Activated CD4-positive, alpha-beta memory T cell treated with anti-CD3 and anti-CD28 coated beads for 36 hours (primary cell): ENCODE measurements at regions of chr6 and their contacts with region 1.

Region 1: GRCh38 chr6:154218301-154218700 is 138.3 kb downstream of the IPCEF1 start:
- DNase-seq: peak; percentile 57
- H3K4me3 Mint-ChIP-seq: peak overlapping the region; percentile 68
- H3K27ac Mint-ChIP-seq: peak overlapping the region; percentile 88
- H3K4me1 Mint-ChIP-seq: peaks cover 62% of the 10 kb centered on the region
- H3K27me3 Mint-ChIP-seq: no peaks in the 10 kb centered on the region

Region 2: GRCh38 chr6:154187714-154188113 is 30.6 kb before region 1 on chr6:
- CTCF ChIA-PET with region 1: no interaction called
- POLR2A ChIA-PET with region 1: no interaction called
- intact Hi-C with region 1: loop called (anchors 2 kb)
- DNase-seq: no peak
- H3K4me3 Mint-ChIP-seq: no peak overlapping the region
- H3K27ac Mint-ChIP-seq: peak overlapping the region; percentile 51
- H3K4me1 Mint-ChIP-seq: peaks cover 41% of the 10 kb centered on the region
- H3K27me3 Mint-ChIP-seq: no peaks in the 10 kb centered on the region

Region 3: DNA sequence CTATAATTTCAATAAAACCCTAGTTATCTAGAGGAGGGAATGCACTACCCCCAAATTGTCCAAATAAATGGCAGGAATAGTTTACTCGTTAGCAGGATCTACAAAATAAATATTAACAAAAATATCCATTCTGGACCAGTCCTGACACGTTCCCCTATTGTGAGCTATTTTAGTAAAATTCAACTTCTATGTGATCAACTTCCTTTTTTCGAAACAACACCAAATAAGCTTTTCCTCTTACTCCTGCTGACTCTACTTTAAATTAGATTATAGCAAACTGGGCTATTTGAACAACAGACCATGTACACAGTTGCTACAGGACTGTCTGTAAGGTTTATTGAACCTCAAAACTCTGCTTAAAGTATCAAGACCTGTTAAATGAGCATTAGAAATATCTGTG is 16.0 kb before region 1 on chr6:
- CTCF ChIA-PET with region 1: no interaction called
- POLR2A ChIA-PET with region 1: no interaction called
- intact Hi-C with region 1: loop called (anchors 1 kb)
- DNase-seq: no peak
- H3K4me3 Mint-ChIP-seq: no peak overlapping the region
- H3K27ac Mint-ChIP-seq: no peak overlapping the region
- H3K4me1 Mint-ChIP-seq: peaks cover 52% of the 10 kb centered on the region
- H3K27me3 Mint-ChIP-seq: no peaks in the 10 kb centered on the region

Region 4: GRCh38 chr6:154261688-154262397 is 43.5 kb after region 1 on chr6:
- CTCF ChIA-PET with region 1: no interaction called
- POLR2A ChIA-PET with region 1: no interaction called
- intact Hi-C with region 1: no loop called
- DNase-seq: no peak
- H3K4me3 Mint-ChIP-seq: no peak overlapping the region
- H3K27ac Mint-ChIP-seq: no peak overlapping the region
- H3K4me1 Mint-ChIP-seq: peaks cover 24% of the 10 kb centered on the region
- H3K27me3 Mint-ChIP-seq: no peaks in the 10 kb centered on the region